Breast epithelium (tissue), 4 donors: ENCODE measurements at regions of chr16 and their contacts with region 1.

Region 1: GRCh38 chr16:3879887-3880564 is 487 bp downstream of the CREBBP start:
- DNase-seq: peak; percentile 59 to 75
- H3K4me3 ChIP-seq: peak overlapping the region; percentile 83 to 86 (median 84)
- H3K27ac ChIP-seq: peak overlapping the region; percentile 90 to 100
- H3K4me1 ChIP-seq: peaks cover 3 to 27% of the 10 kb centered on the region in 2 donors
- H3K27me3 ChIP-seq: no peaks in the 10 kb centered on the region
- CTCF ChIP-seq: no peak
- POLR2A ChIP-seq: no peak

Region 2: DNA sequence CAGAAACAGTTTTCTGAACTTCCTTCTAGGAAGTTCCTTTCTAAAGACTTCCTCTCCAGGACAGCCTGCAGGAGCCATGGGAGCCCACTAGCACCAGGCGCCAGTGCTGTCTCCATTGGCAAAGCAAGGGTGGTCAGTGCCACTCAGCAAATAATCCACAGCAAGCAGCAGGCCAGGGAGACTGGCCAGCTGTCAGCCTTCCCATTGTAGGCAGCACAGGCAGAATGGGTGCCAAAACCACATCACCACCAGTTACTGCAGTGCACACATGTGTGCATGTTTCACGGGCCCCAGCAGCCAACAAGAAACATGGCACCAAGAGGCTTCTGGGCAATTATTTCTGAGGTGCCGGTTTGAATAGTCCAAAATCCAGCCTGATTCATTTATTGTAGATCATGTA is 198.8 kb before region 1 on chr16:
- intact Hi-C with region 1: loop called (anchors 1 kb)
- DNase-seq: no peak
- H3K4me3 ChIP-seq: no peak overlapping the region
- H3K27ac ChIP-seq: no peak overlapping the region
- H3K4me1 ChIP-seq: no peaks in the 10 kb centered on the region
- H3K27me3 ChIP-seq: no peaks in the 10 kb centered on the region
- CTCF ChIP-seq: no peak
- POLR2A ChIP-seq: no peak

Region 3: GRCh38 chr16:4892361-4893102 is 1012.5 kb after region 1 on chr16:
- intact Hi-C with region 1: no loop called
- DNase-seq: no peak
- H3K4me3 ChIP-seq: no peak overlapping the region
- H3K27ac ChIP-seq: no peak overlapping the region
- H3K4me1 ChIP-seq: no peaks in the 10 kb centered on the region
- H3K27me3 ChIP-seq: no peaks in the 10 kb centered on the region
- CTCF ChIP-seq: no peak
- POLR2A ChIP-seq: no peak